PC-9 (cell line): ENCODE measurements at regions of chr2 and their contacts with region 1.

Region 1: GRCh38 chr2:84459018-84459943 is at the start of gene SUCLG1:
- DNase-seq: peak; percentile 72 to 79
- H3K4me3 ChIP-seq: peak within 1 kb of the TSS; percentile 92
- H3K27ac ChIP-seq: peak within 1 kb of the TSS; percentile 51
- H3K4me1 ChIP-seq: peaks cover 17% of the 10 kb centered on the region
- H3K27me3 ChIP-seq: no peaks in the 10 kb centered on the region
- CTCF ChIP-seq: no peak
- total RNA-seq, gene SUCLG1: 42.1 and 59.5 TPM in 2 replicates

Region 2: DNA sequence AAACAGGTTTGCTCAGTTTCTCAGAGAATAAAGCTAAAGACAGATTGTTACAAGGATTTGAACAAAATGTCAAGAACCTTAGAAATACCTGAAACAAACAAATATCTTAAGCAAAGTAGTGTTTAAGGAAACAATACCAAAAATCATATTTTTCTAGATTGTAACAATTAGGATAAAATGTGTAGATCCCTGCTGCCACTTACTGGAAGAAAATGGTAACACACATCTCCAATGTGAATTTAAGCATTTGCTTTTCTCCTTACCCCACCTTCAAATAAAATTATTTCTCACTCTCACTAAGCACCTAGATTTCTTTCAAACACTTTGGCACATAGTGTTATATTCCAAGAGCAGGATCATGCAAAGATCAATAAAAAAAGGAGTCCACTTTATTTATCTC is 35.1 kb before region 1 on chr2:
- CTCF ChIA-PET with region 1: no interaction called
- POLR2A ChIA-PET with region 1: no interaction called
- intact Hi-C with region 1: no loop called
- DNase-seq: no peak
- H3K4me3 ChIP-seq: no peak overlapping the region
- H3K27ac ChIP-seq: no peak overlapping the region
- H3K4me1 ChIP-seq: peaks cover 16% of the 10 kb centered on the region
- H3K27me3 ChIP-seq: no peaks in the 10 kb centered on the region
- CTCF ChIP-seq: peak; percentile 69

Region 3: DNA sequence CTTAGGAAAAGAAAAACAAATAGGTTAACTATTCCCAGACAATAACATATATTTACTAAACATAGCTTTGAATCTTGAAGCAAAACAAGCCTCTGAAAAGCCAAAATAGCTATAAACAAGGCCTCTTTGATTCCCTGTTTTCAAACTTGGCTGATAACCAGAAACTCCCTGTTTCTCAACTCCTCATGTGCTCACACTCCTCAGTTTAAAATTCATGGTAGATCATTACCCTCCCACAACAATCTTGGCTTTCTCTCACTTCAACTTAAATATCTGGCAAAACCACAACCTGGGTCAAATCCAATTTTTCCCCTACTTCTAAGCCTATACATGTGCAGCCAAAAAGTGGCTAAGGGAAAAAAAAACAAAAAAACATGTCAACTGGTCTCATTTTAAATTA is 15.8 kb before region 1 on chr2:
- CTCF ChIA-PET with region 1: no interaction called
- POLR2A ChIA-PET with region 1: no interaction called
- intact Hi-C with region 1: no loop called
- DNase-seq: no peak
- H3K4me3 ChIP-seq: no peak overlapping the region
- H3K27ac ChIP-seq: no peak overlapping the region
- H3K4me1 ChIP-seq: no peaks in the 10 kb centered on the region
- H3K27me3 ChIP-seq: no peaks in the 10 kb centered on the region
- CTCF ChIP-seq: no peak

Region 4: GRCh38 chr2:84474175-84474574 is 14.9 kb after region 1 on chr2:
- CTCF ChIA-PET with region 1: interaction called, 3 read pairs
- POLR2A ChIA-PET with region 1: no interaction called
- intact Hi-C with region 1: loop called (anchors 1 kb)
- DNase-seq: peak; percentile 50 to 91
- H3K4me3 ChIP-seq: no peak overlapping the region
- H3K27ac ChIP-seq: peak overlapping the region; percentile 53
- H3K4me1 ChIP-seq: peaks cover 25% of the 10 kb centered on the region
- H3K27me3 ChIP-seq: no peaks in the 10 kb centered on the region
- CTCF ChIP-seq: no peak